Motor neuron (in vitro differentiated cells): ENCODE measurements at regions of chr5 and their contacts with region 1.

Region 1: DNA sequence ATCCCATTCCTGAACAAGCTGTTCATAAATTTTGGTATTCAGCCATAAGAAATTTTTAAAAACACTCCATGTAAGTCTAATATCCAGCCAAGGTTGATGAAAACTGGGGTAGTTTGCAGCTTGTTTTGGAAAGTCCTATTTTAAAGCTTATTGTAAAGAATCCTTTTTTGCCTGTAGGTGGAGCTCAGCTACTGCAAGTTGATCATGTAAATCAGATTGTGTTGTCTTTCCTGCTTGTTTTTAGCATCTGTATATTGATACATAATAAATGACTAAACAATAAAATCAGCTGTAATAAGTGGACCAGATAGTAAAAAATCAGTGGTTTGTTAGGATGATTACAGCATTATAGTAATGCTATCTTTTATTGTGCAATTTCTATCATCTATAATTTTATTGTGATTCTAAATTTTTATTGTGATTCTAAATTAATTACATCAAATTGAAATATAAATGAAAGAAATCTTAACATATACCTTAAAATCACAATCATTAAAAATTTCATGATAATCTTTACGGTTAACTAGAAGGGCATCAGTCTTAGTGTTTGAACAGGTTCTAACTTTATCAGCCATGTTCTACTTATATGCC is 42.4 kb downstream of the CWC27 start:
- ATAC-seq: peak in 4 of 8 experiments; percentile 28 to 64 (median 58)
- H3K4me3 ChIP-seq: no peak overlapping the region
- H3K27ac ChIP-seq: no peak overlapping the region
- H3K4me1 ChIP-seq: no peaks in the 10 kb centered on the region

Region 2: DNA sequence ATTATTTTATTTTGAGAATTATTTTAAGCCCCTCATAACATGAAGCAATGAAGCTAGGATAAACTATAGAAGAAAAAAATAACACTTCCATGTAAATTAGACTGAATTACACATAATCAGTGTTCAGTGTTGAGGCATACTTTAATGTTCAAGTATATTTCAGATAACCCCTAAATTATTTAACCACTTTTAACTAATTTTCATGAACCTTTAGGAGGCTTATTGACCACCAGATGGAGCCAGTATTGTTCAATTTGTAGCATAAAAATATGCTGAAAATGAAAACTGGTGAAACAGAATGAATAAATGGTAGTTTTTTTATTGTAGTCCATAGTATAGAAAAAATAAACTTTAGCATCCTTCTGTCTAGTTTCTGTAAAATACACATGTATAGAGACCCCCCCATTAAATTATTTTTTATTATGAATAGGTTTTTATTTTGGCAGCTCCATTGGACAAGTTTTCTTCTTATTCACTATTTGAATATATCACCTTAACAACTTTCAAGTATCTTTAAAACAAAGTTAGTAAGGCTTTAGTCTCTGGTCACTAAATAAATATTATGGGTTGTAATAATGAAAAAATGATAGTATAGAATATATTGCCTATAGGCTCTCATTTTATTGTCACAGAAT is 147.7 kb after region 1 on chr5:
- in situ Hi-C with region 1: loop called in 1 of 9 experiments (anchors 25 kb)
- ATAC-seq: no peak
- H3K4me3 ChIP-seq: no peak overlapping the region
- H3K27ac ChIP-seq: no peak overlapping the region
- H3K4me1 ChIP-seq: no peaks in the 10 kb centered on the region

Region 3: DNA sequence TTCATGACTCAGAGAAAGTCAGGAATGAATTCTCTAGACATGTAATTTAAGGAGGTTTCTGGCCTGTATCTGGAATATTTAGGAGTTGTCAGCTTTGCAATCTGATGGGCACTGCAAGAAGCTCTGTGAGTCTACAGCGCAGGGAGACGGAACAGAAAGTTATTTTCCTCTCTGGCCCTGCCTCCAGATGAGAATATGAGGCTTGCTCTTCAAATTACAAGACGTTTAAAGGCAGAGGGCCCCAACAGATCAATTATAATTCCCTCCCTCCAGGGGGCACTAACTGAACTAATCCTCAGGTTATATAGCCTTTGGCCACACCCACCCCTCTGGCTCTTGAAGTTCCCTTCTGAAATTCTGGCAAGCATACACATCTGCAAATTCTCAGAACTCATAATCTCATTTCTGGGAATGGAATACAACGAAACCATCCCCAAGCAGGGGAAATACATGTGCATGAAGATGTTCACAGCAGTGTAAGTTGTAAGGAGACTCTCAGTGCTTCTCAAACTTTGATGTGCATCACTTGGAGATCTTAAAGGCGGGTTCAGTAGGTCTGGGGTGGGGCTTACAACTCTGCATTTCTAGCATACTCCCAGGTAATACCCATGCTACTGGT is 265.2 kb after region 1 on chr5:
- in situ Hi-C with region 1: loop called in 1 of 9 experiments (anchors 25 kb)
- ATAC-seq: peak in 3 of 8 experiments; percentile 74 to 93 (median 90)
- H3K4me3 ChIP-seq: no peak overlapping the region
- H3K27ac ChIP-seq: no peak overlapping the region
- H3K4me1 ChIP-seq: peaks cover 2 to 4% of the 10 kb centered on the region in 2 donors

Region 4: DNA sequence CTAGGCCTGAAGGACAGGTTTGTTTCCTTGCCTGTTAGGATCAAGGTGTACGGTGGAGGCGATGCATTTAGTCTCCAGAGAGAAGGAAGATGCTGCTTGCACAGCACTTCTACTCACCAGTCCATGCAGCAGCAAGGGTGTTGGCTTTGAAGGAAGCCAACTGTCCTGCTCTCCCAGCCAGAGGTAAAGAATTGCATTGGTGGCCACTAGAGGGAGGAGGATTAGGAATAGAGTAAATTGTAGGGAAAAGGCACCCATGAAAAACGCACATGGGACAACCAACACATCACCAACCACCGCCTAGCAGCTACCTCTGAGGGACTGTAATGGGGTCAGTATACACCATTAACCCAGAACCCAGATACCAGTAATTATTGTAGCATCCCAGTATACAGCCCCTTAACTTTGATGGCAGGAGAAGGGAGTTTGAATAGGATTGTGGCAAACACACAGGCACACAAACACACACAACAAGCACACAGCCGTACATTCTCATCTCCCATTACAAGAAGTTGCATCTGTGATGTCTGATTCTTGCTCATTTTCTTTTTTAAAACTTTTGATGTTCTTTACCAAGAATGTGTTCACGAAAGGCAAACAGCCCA is 402.9 kb after region 1 on chr5:
- in situ Hi-C with region 1: loop called in 1 of 9 experiments (anchors 25 kb)
- ATAC-seq: peak in 3 of 8 experiments; percentile 60 to 72 (median 71)
- H3K4me3 ChIP-seq: no peak overlapping the region
- H3K27ac ChIP-seq: no peak overlapping the region
- H3K4me1 ChIP-seq: no peaks in the 10 kb centered on the region

Region 5: GRCh38 chr5:65481635-65482295 is 670.6 kb after region 1 on chr5 and contains the start of gene ADAMTS6:
- in situ Hi-C with region 1: loop called in 7 of 9 experiments (anchors 10 to 25 kb)
- ATAC-seq: peak; percentile 71 to 90 (median 88)
- H3K4me3 ChIP-seq: peak within 1 kb of the TSS; percentile 27 to 41 (median 34)
- H3K27ac ChIP-seq: no peak within 1 kb of the TSS
- H3K4me1 ChIP-seq: peaks cover 0 to 8% of the 10 kb centered on the region in 2 donors
- total RNA-seq, gene ADAMTS6: 0.80 to 5.1 (median 3.4) TPM